ENCODE measurements at regions of chr2 and their contacts with region 1.

Region 1: GRCh38 chr2:12931186-12931844 is 214.6 kb downstream of the TRIB2 start:
- DNase-seq: peak in 2 of 5 donors; percentile 23 to 29
- ATAC-seq: peak; percentile 78 to 92 (median 88)
- H3K4me3 ChIP-seq: no peak overlapping the region
- H3K27ac ChIP-seq: peak overlapping the region in 8 of 12 donors; percentile 2 to 45 (median 16)
- H3K4me1 ChIP-seq: peaks cover 6 to 45% (median 25%) of the 10 kb centered on the region in 12 donors
- H3K27me3 ChIP-seq: no peaks in the 10 kb centered on the region
- CTCF ChIP-seq: peak; percentile 81 to 95 (median 93)
- POLR2A ChIP-seq: no peak

Region 2: DNA sequence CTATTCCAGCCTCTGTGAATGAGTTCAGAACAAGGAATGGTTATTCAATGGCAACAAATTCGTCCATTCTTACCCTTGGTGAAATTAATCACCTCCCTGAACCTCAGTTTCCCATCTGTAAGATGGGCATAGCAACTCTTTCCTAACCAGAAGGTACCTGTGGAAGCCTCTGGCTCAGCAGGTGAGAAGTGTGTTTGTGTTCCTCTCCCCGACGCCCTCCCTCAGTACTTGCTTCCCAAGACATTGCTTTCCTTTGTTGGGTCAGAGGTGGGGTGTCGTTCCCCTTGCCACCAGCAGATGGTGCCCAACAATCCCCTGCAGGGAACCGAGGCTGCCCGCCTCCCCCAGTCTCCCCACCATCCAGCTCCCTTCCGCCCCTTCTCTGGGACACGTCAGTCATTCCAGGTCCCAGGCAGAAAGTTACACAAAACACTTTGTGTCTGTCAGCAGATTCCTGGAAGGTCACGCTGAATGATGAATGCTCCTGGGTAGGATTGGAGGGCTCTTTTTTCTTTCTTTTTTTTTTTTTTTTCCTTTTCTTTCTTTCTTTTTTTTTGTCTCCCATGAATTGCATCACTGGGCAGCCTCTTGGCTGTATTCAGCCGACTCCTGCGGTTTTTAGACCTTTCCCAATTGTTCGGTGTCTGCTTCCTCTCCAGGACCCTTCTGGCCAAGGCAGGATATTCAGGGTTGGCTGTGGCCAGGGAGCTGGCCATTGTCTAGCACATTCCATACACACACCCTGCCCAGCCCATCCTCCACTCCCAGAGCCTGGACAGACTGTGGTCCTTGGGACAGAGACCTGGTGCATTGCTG is 1067.6 kb before region 1 on chr2:
- intact Hi-C with region 1: loop called in 3 of 10 experiments (anchors 10 kb)
- DNase-seq: peak; percentile 85 to 91 (median 87)
- ATAC-seq: peak; percentile 83 to 96 (median 94)
- H3K4me3 ChIP-seq: peak overlapping the region in 6 of 12 donors; percentile 3 to 24 (median 15)
- H3K27ac ChIP-seq: peak overlapping the region in 11 of 12 donors; percentile 45 to 67 (median 53)
- H3K4me1 ChIP-seq: peaks cover 0 to 28% (median 12%) of the 10 kb centered on the region in 12 donors
- H3K27me3 ChIP-seq: no peaks in the 10 kb centered on the region
- CTCF ChIP-seq: peak; percentile 90 to 99 (median 96)
- POLR2A ChIP-seq: no peak

Region 3: GRCh38 chr2:12416600-12416999 is 514.7 kb before region 1 on chr2:
- intact Hi-C with region 1: loop called in 2 of 10 experiments (anchors 10 kb)
- DNase-seq: peak in 4 of 5 donors; percentile 33 to 68 (median 54)
- ATAC-seq: peak in 2 of 4 donors; percentile 20 to 58
- H3K4me3 ChIP-seq: no peak overlapping the region
- H3K27ac ChIP-seq: no peak overlapping the region
- H3K4me1 ChIP-seq: peaks cover 0 to 19% (median 0%) of the 10 kb centered on the region in 12 donors
- H3K27me3 ChIP-seq: no peaks in the 10 kb centered on the region
- CTCF ChIP-seq: peak; percentile 37 to 68 (median 54)
- POLR2A ChIP-seq: no peak

Region 4: GRCh38 chr2:12733846-12734245 is 197.5 kb before region 1 on chr2:
- intact Hi-C with region 1: loop called in 1 of 10 experiments (anchors 5 kb)
- DNase-seq: peak in 4 of 5 donors; percentile 45 to 79 (median 72)
- ATAC-seq: peak; percentile 68 to 79 (median 72)
- H3K4me3 ChIP-seq: no peak overlapping the region
- H3K27ac ChIP-seq: peak overlapping the region; percentile 51 to 83 (median 74)
- H3K4me1 ChIP-seq: peaks cover 31 to 96% (median 82%) of the 10 kb centered on the region in 12 donors
- H3K27me3 ChIP-seq: no peaks in the 10 kb centered on the region
- CTCF ChIP-seq: no peak
- POLR2A ChIP-seq: peak in 1 of 2 donors; percentile 27

Region 5: DNA sequence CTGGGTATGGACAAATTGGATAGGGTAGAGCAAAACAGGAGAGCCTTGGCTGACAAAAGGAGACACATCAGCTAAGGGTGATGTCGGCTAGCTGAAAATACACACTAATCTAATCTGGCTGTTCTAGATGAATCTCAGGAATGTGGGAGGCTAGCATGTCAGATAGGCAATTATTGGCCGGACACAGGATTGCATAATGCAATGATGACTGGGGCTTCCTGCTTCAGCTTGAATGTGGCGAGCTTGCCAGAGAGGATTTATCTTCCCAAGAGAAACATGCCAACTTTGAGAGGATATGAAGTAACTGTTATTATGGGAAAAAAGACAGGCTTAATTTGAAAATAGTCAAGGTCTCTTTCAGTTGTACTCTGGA is 112.2 kb before region 1 on chr2:
- intact Hi-C with region 1: loop called in 5 of 10 experiments (anchors 5 to 10 kb)
- DNase-seq: peak in 4 of 5 donors; percentile 87 to 90 (median 88)
- ATAC-seq: peak; percentile 97 to 98 (median 98)
- H3K4me3 ChIP-seq: peak overlapping the region in 1 of 12 donors; percentile 3
- H3K27ac ChIP-seq: peak overlapping the region; percentile 70 to 95 (median 89)
- H3K4me1 ChIP-seq: peaks cover 7 to 61% (median 45%) of the 10 kb centered on the region in 12 donors
- H3K27me3 ChIP-seq: no peaks in the 10 kb centered on the region
- CTCF ChIP-seq: no peak
- POLR2A ChIP-seq: peak in 1 of 2 donors; percentile 45

Region 6: DNA sequence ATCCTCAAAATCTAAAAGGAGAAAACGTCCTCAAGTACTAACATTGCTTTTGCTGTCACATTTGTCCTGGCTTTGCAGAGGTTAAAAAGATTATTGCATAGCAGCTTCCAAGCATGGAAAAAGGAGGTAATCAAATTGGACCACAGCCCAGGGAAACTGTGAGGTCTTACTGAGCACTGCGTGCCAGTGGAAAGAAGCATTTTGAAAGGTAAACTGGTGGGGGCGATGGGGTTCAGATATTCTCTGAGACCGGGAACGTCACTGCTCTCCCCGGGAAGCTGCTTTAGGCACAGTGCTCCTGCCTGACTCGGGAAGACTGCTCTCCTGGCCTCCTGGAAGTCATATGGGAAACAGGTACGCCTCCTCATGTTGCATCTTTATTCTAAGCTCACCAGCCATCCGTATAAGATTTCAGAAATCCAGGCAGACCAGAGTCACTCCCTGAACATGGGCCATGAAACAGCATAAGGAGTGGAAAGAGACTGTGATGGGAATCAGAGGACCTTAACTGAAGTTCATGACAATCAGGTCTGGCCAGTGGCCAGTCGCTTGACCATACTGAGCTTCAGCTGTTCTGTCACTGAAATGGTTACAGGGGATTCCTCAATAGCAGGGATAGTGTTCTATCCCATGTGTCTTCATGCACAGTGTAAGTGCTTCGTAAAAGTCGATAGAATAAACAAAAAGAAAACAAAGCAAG is 69.5 kb after region 1 on chr2:
- intact Hi-C with region 1: loop called in 8 of 10 experiments (anchors 5 to 10 kb)
- DNase-seq: peak in 4 of 5 donors; percentile 50 to 73 (median 60)
- ATAC-seq: peak; percentile 71 to 89 (median 84)
- H3K4me3 ChIP-seq: peak overlapping the region in 11 of 12 donors; percentile 4 to 51 (median 32)
- H3K27ac ChIP-seq: peak overlapping the region in 10 of 12 donors; percentile 14 to 84 (median 64)
- H3K4me1 ChIP-seq: peaks cover 0 to 55% (median 27%) of the 10 kb centered on the region in 12 donors
- H3K27me3 ChIP-seq: no peaks in the 10 kb centered on the region
- CTCF ChIP-seq: no peak
- POLR2A ChIP-seq: peak in 1 of 2 donors; percentile 29